A549 (cell line): ENCODE measurements at regions of chr1 and their contacts with region 1.

Region 1: GRCh38 chr1:31789259-31790065 is 25.3 kb upstream of the ADGRB2 start:
- DNase-seq: peak; percentile 86 to 94
- ATAC-seq: peak; percentile 72 to 88
- H3K4me3 ChIP-seq: peak overlapping the region; percentile 69
- H3K27ac ChIP-seq: peak overlapping the region; percentile 94 to 95
- H3K4me1 ChIP-seq: peaks cover 13% of the 10 kb centered on the region
- CTCF ChIP-seq: peak; percentile 72
- EP300 ChIP-seq: no peak
- POLR2A ChIP-seq: no peak
- RAD21 ChIP-seq: peak; percentile 90 to 97

Region 2: GRCh38 chr1:31663622-31664452 is 125.6 kb before region 1 on chr1:
- CTCF ChIA-PET with region 1: interaction called, 113 read pairs
- POLR2A ChIA-PET with region 1: interaction called, 5 read pairs
- DNase-seq: peak; percentile 30 to 74
- ATAC-seq: peak; percentile 49 to 66; a peak in 5 of 6 replicates
- H3K4me3 ChIP-seq: no peak overlapping the region
- H3K27ac ChIP-seq: peak overlapping the region in 1 of 2 experiments; percentile 91; a peak in 3 of 6 replicates
- H3K4me1 ChIP-seq: peaks cover 33% of the 10 kb centered on the region
- CTCF ChIP-seq: peak; percentile 76
- EP300 ChIP-seq: no peak
- POLR2A ChIP-seq: no peak
- RAD21 ChIP-seq: peak; percentile 95 to 96

Region 3: DNA sequence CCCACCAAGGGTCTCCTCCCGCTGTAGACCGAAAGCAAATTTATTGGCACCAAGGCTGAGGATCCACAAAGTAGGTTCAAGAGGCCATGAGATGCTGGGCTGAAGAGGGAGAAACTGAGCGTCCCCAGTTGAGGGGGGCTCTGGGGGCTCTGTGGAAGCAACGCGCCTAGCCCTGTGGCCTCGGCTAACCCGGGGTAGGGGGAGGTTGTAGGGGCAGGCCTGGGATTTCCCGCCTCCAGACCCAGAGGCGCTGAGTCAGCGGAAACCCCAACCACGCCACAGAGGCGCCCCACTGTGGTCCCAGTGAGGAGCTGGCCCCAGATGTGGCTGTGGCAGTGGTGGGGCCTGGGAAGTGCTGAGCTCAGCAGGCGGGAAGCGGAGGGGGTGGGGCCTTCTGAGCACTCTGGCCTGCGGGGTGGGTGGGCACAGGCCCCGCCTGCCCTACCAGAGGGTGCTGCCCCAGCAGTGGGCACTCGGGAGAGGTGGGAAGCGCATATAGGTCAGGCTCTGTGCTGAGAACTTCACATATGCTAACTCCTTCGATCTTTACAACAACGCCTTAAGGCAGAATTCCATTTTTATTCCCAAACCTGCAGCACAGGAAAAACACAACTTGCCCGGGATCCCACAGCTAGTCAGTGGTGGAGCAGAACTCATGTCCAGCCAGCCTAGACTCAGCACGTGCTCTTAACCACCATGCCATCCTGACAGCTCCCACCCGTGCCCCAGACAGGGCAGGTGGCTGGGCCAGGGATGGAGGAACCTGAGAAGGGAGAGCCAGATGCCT is 84.2 kb before region 1 on chr1:
- CTCF ChIA-PET with region 1: interaction called, 12 read pairs
- POLR2A ChIA-PET with region 1: no interaction called
- DNase-seq: peak; percentile 19 to 41
- ATAC-seq: peak in 1 of 2 experiments; percentile 22; a peak in 3 of 6 replicates
- H3K4me3 ChIP-seq: no peak overlapping the region
- H3K27ac ChIP-seq: peak overlapping the region; percentile 56 to 95; a peak in 4 of 6 replicates
- H3K4me1 ChIP-seq: peaks cover 55% of the 10 kb centered on the region
- CTCF ChIP-seq: no peak; the same call in 2 of the 3 replicates
- EP300 ChIP-seq: no peak
- POLR2A ChIP-seq: no peak
- RAD21 ChIP-seq: peak; percentile 62 to 64

Region 4: GRCh38 chr1:31745096-31745945 is 44.1 kb before region 1 on chr1:
- CTCF ChIA-PET with region 1: interaction called, 12 read pairs
- POLR2A ChIA-PET with region 1: interaction called, 6 read pairs
- DNase-seq: peak; percentile 54 to 77
- ATAC-seq: peak; percentile 85 to 95; a peak in 5 of 6 replicates
- H3K4me3 ChIP-seq: no peak overlapping the region
- H3K27ac ChIP-seq: peak overlapping the region in 1 of 2 experiments; percentile 21; a peak in 1 of 6 replicates
- H3K4me1 ChIP-seq: peaks cover 5% of the 10 kb centered on the region; the same call in 1 of the 3 replicates
- CTCF ChIP-seq: peak; percentile 42; the same call in 2 of the 3 replicates
- EP300 ChIP-seq: no peak
- POLR2A ChIP-seq: no peak
- RAD21 ChIP-seq: peak; percentile 68 to 73

Region 5: DNA sequence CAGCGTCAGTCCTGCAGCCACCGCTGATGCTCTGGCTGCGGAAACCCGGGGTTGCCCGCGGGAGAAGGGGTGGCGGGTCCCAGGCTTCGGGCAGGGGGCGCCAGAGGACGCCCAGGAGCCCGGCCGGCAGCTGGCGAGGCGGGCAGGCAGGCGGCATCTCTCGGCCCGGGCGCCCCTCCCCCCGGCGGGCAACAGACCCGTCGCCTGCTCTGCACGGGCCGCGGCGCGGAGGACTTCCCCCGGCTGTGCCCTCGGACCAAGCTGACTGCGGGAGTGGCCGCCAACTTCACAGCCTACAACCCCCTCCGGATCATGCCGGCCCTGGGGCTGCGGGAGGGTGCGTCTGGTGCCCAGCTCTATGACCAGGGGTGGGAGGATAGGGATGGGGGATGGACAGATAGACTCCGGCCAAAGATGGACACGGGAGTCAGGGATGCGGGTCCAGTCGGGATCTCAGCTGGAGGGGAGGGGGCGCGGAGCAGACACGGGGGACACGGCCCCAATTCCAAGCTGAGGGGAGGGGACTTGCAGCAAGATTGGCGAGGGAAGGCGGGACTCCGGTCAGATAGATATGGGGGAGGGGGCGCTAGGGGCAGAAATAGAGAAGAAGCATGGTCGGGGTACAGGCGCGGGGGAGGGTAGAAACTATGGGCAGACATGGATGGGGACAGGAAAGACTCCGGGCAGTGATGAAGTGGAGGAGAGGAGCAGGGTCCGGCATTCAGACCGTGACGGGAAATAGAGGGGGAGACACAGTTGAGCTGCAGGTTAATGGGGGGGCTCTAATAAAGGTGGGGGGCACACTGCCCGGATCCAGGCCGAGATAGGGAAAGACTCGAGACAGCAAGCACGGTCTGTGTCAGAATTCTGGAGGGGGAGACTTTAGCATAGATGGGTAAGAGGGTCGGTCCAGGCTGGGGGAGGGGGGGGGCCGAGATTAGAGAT is 26.5 kb before region 1 on chr1:
- CTCF ChIA-PET with region 1: interaction called, 242 read pairs
- POLR2A ChIA-PET with region 1: interaction called, 6 read pairs
- DNase-seq: peak; percentile 70 to 76
- ATAC-seq: peak; percentile 62 to 76
- H3K4me3 ChIP-seq: peak overlapping the region; percentile 67
- H3K27ac ChIP-seq: peak overlapping the region; percentile 76 to 98
- H3K4me1 ChIP-seq: peaks cover 40% of the 10 kb centered on the region
- CTCF ChIP-seq: peak; percentile 64
- EP300 ChIP-seq: no peak
- POLR2A ChIP-seq: no peak
- RAD21 ChIP-seq: peak; percentile 43 to 64

Region 6: GRCh38 chr1:31778763-31779488 is 10.5 kb before region 1 on chr1:
- CTCF ChIA-PET with region 1: interaction called, 16 read pairs
- POLR2A ChIA-PET with region 1: no interaction called
- DNase-seq: no peak
- ATAC-seq: no peak
- H3K4me3 ChIP-seq: no peak overlapping the region
- H3K27ac ChIP-seq: no peak overlapping the region
- H3K4me1 ChIP-seq: peaks cover 6% of the 10 kb centered on the region; the same call in 2 of the 3 replicates
- CTCF ChIP-seq: no peak
- EP300 ChIP-seq: no peak
- POLR2A ChIP-seq: no peak
- RAD21 ChIP-seq: no peak

Region 7: GRCh38 chr1:31891280-31891679 is 101.8 kb after region 1 on chr1:
- CTCF ChIA-PET with region 1: no interaction called
- POLR2A ChIA-PET with region 1: no interaction called
- DNase-seq: no peak
- ATAC-seq: no peak
- H3K4me3 ChIP-seq: no peak overlapping the region
- H3K27ac ChIP-seq: no peak overlapping the region
- H3K4me1 ChIP-seq: no peaks in the 10 kb centered on the region
- CTCF ChIP-seq: no peak
- EP300 ChIP-seq: no peak
- POLR2A ChIP-seq: no peak
- RAD21 ChIP-seq: no peak